ENCODE measurements at regions of chr14 and their contacts with region 1.

Region 1: DNA sequence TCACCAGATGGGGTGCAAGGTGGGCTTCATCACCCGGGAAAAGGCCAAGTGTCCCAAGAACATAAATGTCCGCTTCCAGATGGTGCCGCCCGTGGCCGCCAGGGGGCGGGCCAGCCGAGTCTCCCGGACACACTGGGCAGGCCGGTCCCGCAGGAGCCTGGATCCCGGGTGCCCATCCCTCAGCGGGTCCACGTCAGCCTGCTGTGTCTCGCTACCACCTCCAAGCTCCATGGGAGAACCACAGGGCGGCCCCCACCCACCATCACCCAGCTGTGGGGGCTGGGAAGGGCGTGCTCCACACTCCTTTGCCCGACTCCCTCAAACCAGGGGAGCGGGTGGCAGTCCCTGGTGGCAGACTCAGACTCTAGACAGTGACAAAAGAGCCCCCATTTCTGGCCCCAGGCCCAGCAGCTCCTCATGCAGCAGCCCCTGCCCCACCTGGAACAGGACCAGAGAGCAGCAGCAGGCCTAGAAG is 22.0 kb upstream of the NUDT14 start:
- ATAC-seq: peak; percentile 63 to 84 (median 82)
- H3K4me3 ChIP-seq: no peak overlapping the region
- H3K27ac ChIP-seq: peak overlapping the region in 1 of 2 donors; percentile 14
- H3K4me1 ChIP-seq: peaks cover 26 to 39% of the 10 kb centered on the region in 2 donors

Region 2: GRCh38 chr14:105351920-105352851 is 149.1 kb after region 1 on chr14:
- in situ Hi-C with region 1: loop called in 1 of 9 experiments (anchors 25 kb)
- ATAC-seq: peak; percentile 91 to 99 (median 96)
- H3K4me3 ChIP-seq: no peak overlapping the region
- H3K27ac ChIP-seq: no peak overlapping the region
- H3K4me1 ChIP-seq: peaks cover 0 to 2% of the 10 kb centered on the region in 2 donors

Region 3: GRCh38 chr14:105480952-105481801 is 278.1 kb after region 1 on chr14:
- in situ Hi-C with region 1: no loop called
- ATAC-seq: peak; percentile 39 to 73 (median 70)
- H3K4me3 ChIP-seq: peak overlapping the region in 2 of 5 donors; percentile 3 to 5
- H3K27ac ChIP-seq: peak overlapping the region; percentile 18 to 86
- H3K4me1 ChIP-seq: peaks cover 38 to 77% of the 10 kb centered on the region in 2 donors